Cardiac septum (tissue), 1 donor: ENCODE measurements at regions of chr19 and their contacts with region 1.

Region 1: DNA sequence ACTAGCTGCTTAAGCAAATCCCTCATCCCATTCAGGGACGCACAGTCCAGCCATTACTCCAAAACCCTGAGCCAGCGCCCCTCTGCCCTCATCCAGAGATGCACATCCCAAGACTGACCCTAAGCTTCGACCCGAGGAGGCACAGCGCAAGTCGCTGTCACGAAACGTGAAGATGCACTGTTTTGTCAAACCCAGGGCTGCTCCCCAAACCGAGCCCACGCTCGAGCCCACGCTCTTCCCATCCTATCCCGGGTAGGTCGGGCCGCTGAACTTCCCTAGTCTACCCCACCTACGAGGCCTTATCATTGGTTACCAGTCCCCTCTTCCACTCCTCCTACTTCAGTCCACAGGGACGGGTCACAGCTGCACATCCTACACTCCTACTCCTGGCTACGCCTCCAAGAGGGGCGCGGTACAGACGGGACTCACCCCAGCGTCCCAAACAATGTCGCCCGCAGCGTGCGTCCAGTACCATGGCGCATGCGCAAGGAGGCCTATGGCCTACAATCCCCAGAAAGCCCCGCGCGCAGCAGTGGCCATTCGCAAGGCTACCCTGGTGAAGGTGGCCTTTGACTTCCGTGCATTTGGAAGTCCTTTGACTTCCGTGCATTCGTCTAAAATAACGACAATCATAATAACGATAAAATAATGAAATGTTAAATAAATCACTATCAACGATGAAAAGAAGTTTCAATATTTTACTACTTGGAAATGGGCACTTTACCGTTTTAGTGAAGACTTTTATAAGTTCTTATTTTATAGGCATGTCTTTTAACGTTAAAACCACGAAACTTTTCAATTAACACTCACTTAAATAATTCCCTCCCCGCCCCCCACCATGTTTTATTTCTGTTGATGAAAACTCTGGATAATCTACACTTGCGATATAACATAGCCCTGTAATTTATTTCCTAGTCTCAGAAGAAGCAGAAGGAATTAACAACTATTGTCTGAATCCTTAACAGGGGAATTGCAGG is at the start of gene ZNF285:
- DNase-seq: peak; percentile 95
- total RNA-seq, gene ZNF285: 3.0 TPM

Region 2: GRCh38 chr19:44260363-44261070 is 140.9 kb before region 1 on chr19:
- intact Hi-C with region 1: no loop called
- DNase-seq: no peak

Region 3: GRCh38 chr19:44304659-44305193 is 96.7 kb before region 1 on chr19 and contains the start of gene ZNF235:
- intact Hi-C with region 1: loop called (anchors 5 kb)
- DNase-seq: peak; percentile 95
- total RNA-seq, gene ZNF235: 5.2 TPM

Region 4: GRCh38 chr19:44356383-44357111 is 44.9 kb before region 1 on chr19 and contains the start of gene ZNF112:
- intact Hi-C with region 1: loop called (anchors 5 kb)
- DNase-seq: peak; percentile 90
- total RNA-seq, gene ZNF112: 3.8 TPM

Region 5: GRCh38 chr19:44447916-44448674 is 46.7 kb after region 1 on chr19 and contains the start of gene ZNF229:
- intact Hi-C with region 1: loop called (anchors 2 kb)
- DNase-seq: peak; percentile 94
- total RNA-seq, gene ZNF229: 7.1 TPM

Region 6: DNA sequence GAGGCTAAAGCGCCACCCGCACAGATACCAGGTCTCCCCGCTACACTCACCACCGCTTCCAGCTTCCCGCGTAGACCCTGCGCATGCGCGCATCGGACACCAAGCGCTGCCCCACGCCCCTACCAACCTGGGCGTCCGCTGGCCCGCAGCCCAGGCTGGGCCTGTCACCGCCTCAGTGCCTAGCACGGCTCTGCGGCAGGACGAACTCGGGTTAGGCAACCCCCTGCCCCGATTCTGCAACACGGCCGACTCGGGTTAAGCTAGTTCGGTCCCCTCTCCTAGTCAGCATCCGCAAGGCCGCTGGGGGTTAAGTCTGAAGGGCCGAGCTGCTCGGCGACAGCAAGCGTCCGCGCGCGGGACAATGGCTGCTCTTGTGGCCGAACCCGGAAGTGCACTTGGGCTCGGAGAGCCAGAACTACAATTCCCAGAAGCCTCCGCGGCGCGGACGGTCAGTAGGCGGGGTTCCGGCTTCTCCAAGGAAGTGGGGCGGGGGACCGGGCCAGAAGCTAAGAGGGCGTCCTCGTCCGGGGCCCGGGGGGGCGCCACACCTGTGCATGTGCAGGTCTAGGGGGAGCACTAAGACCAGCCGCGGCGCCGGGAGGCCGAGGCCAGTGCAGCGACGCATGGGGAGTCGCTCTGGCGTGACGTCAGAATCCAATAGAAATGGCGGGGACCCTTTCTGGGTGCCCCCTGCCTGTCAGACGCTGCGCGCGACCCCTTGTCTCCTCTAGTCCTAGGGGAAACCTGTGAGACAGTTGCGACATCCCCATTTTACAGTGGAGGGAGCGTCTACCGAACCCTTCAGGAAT is 98.9 kb after region 1 on chr19 and contains the start of gene ZNF180:
- intact Hi-C with region 1: loop called (anchors 1 kb)
- DNase-seq: peak; percentile 97
- total RNA-seq, gene ZNF180: 3.7 TPM